ENCODE measurements at regions of chr12 and their contacts with region 1.

Region 1: GRCh38 chr12:56987551-56988053 is 18.7 kb downstream of the ZBTB39 start:
- DNase-seq: peak; percentile 59 to 86
- H3K4me3 ChIP-seq: no peak overlapping the region
- H3K27ac ChIP-seq: no peak overlapping the region
- H3K4me1 ChIP-seq: peaks cover 0 to 7% (median 5%) of the 10 kb centered on the region in 4 donors
- H3K27me3 ChIP-seq: no peaks in the 10 kb centered on the region
- CTCF ChIP-seq: peak; percentile 93 to 94

Region 2: DNA sequence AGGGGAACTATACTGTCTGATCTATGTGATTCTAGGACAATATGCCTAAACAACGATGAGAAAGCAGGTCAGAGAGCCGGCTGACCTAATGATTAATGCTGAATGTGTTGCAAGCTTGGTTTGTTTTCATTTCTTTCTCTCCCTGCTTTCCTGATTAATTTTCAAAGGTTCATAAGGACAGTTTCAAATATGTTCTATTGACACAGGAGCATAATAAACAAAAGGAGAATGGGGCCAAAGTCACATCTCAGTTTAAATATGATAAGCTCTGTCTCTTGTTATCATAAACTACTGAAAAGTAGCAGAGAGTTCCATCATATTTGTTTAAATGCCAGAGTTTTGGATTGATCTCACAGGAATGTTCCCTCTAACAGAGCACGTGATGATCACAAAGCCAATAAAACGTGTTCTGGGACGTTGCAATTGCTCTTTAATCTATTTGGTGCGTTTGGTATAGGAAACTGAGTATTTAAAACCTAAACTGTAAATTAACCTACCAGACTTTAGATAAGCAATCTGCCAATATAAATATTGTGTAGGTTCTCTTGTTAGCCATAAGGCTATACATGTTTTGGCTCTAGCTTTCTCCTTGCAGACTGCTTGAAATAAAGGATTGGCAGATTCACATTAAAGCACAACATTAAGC is 228.2 kb before region 1 on chr12:
- intact Hi-C with region 1: loop called (anchors 2 kb)
- DNase-seq: no peak
- H3K4me3 ChIP-seq: no peak overlapping the region
- H3K27ac ChIP-seq: no peak overlapping the region
- H3K4me1 ChIP-seq: peaks cover 0 to 3% (median 0%) of the 10 kb centered on the region in 4 donors
- H3K27me3 ChIP-seq: no peaks in the 10 kb centered on the region
- CTCF ChIP-seq: no peak

Region 3: DNA sequence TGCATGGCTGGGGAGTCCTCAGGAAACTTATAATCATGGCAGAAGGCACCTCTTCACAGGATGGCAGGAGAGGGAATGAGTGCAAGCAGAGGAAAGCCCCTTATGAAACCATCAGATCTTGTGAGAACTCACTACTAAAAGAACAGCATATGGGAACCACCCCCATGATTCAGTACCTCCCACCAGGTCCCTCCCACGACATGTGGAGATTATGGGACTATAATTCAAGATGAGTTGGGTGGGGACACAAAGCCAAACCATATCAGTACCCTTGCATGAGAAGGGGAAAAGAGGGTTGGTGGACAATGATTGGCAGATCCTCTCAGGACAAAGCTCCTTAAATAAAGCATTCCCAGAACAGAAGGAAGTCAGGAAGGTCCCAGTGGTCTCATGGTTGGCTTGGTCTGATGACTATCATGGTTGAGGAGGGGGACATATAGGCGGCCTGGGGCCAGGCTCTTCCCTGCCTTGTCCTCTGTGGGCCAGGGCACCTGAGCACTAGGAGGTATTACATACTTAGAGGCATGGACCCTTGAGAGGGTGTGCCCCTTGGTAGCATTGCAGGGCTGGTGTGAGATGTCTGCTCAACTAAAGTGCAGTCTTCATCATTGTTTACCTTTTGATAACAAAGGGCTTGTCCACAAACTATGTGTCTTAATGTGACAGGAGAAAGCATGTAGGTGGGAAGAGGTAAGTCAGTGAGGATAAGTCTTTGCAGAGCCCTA is 202.3 kb before region 1 on chr12:
- intact Hi-C with region 1: no loop called
- DNase-seq: no peak
- H3K4me3 ChIP-seq: no peak overlapping the region
- H3K27ac ChIP-seq: no peak overlapping the region
- H3K4me1 ChIP-seq: no peaks in the 10 kb centered on the region
- H3K27me3 ChIP-seq: no peaks in the 10 kb centered on the region
- CTCF ChIP-seq: no peak